CD4-positive, alpha-beta T cell (primary cell): ENCODE measurements at regions of chr15 and their contacts with region 1.

Region 1: GRCh38 chr15:34043391-34043790 is 4.4 kb upstream of the AVEN start:
- DNase-seq: no peak
- ATAC-seq: no peak
- H3K4me3 ChIP-seq: no peak overlapping the region
- H3K4me3 Mint-ChIP-seq: no peak overlapping the region
- H3K27ac ChIP-seq: no peak overlapping the region
- H3K27ac Mint-ChIP-seq: no peak overlapping the region
- H3K4me1 ChIP-seq: peaks cover 7% of the 10 kb centered on the region
- H3K4me1 Mint-ChIP-seq: peaks cover 13% of the 10 kb centered on the region
- H3K27me3 ChIP-seq: no peaks in the 10 kb centered on the region
- H3K27me3 Mint-ChIP-seq: no peaks in the 10 kb centered on the region
- CTCF ChIP-seq: no peak

Region 2: DNA sequence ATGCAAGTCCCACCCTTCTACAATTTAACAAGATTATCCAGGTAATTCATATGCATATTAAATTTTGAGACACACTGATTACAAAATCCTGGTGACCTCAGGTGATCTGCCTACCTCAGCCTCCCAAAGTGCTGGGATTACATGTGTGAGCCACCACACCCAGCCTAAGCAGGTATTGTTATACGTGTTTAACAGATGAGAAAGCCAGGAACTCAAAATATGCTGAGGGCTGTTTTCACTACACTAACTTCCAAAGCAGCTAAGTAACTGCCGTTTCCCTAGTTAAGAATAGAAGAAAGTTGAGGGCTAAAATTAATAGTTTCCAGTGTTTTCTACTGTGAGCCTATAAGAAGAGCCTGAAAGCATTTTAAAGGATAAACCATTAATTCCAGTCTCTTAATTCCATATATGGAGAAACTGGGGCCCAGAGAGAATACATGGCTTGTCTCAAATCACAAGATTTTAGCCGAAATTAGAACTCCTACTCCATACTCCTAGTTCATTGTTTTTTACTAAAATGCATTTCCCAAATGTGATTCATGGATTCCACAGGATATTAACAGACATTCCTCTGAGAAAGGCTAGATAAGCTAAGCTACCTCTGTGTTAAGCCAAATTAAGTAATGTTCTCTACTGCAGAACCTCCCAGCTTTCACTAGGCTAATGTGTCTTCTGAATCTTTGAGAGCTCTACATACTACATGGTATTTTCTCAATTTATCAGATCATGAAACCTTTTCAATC is 12.6 kb after region 1 on chr15:
- CTCF ChIA-PET with region 1: no interaction called
- POLR2A ChIA-PET with region 1: interaction called, 4 read pairs
- intact Hi-C with region 1: loop called in 1 of 2 experiments (anchors 2 kb)
- DNase-seq: no peak
- ATAC-seq: no peak
- H3K4me3 ChIP-seq: no peak overlapping the region
- H3K4me3 Mint-ChIP-seq: no peak overlapping the region
- H3K27ac ChIP-seq: no peak overlapping the region
- H3K27ac Mint-ChIP-seq: no peak overlapping the region
- H3K4me1 ChIP-seq: no peaks in the 10 kb centered on the region
- H3K4me1 Mint-ChIP-seq: no peaks in the 10 kb centered on the region
- H3K27me3 ChIP-seq: no peaks in the 10 kb centered on the region
- H3K27me3 Mint-ChIP-seq: no peaks in the 10 kb centered on the region
- CTCF ChIP-seq: no peak

Region 3: GRCh38 chr15:34188711-34189110 is 145.3 kb after region 1 on chr15:
- CTCF ChIA-PET with region 1: no interaction called
- POLR2A ChIA-PET with region 1: no interaction called
- intact Hi-C with region 1: no loop called
- DNase-seq: no peak
- ATAC-seq: no peak
- H3K4me3 ChIP-seq: no peak overlapping the region
- H3K4me3 Mint-ChIP-seq: no peak overlapping the region
- H3K27ac ChIP-seq: no peak overlapping the region
- H3K27ac Mint-ChIP-seq: no peak overlapping the region
- H3K4me1 ChIP-seq: peaks cover 4% of the 10 kb centered on the region
- H3K4me1 Mint-ChIP-seq: peaks cover 19% of the 10 kb centered on the region
- H3K27me3 ChIP-seq: no peaks in the 10 kb centered on the region
- H3K27me3 Mint-ChIP-seq: no peaks in the 10 kb centered on the region
- CTCF ChIP-seq: no peak